ENCODE measurements at regions of chr3 and their contacts with region 1.

Region 1: GRCh38 chr3:57555738-57556458 is at the start of gene PDE12:
- DNase-seq: peak; percentile 87 to 88
- H3K4me3 ChIP-seq: peak within 1 kb of the TSS; percentile 52 to 81 (median 67)
- H3K27ac ChIP-seq: peak within 1 kb of the TSS; percentile 83 to 98 (median 89)
- H3K4me1 ChIP-seq: peaks cover 19 to 25% of the 10 kb centered on the region in 2 donors
- H3K27me3 ChIP-seq: no peaks in the 10 kb centered on the region
- CTCF ChIP-seq: peak in 1 of 6 experiments; percentile 16
- POLR2A ChIP-seq: peak; percentile 66 to 74
- total RNA-seq, gene PDE12: 13.6 to 33.4 (median 28.7) TPM

Region 2: GRCh38 chr3:57755668-57756527 is 200.0 kb after region 1 on chr3 and contains the start of gene SLMAP:
- intact Hi-C with region 1: loop called (anchors 10 kb)
- DNase-seq: peak; percentile 97 to 99
- H3K4me3 ChIP-seq: peak within 1 kb of the TSS; percentile 80 to 99 (median 95)
- H3K27ac ChIP-seq: peak within 1 kb of the TSS; percentile 87 to 95 (median 89)
- H3K4me1 ChIP-seq: peaks cover 24 to 29% of the 10 kb centered on the region in 2 donors
- H3K27me3 ChIP-seq: no peaks in the 10 kb centered on the region
- CTCF ChIP-seq: no peak
- POLR2A ChIP-seq: peak; percentile 62 to 90
- total RNA-seq, gene SLMAP: 79.7 to 89.4 (median 83.4) TPM

Measured in thyroid gland (tissue), 4 donors.